Heart left ventricle (tissue), 16 donors: ENCODE measurements at regions of chr1 and their contacts with region 1.

Region 1: DNA sequence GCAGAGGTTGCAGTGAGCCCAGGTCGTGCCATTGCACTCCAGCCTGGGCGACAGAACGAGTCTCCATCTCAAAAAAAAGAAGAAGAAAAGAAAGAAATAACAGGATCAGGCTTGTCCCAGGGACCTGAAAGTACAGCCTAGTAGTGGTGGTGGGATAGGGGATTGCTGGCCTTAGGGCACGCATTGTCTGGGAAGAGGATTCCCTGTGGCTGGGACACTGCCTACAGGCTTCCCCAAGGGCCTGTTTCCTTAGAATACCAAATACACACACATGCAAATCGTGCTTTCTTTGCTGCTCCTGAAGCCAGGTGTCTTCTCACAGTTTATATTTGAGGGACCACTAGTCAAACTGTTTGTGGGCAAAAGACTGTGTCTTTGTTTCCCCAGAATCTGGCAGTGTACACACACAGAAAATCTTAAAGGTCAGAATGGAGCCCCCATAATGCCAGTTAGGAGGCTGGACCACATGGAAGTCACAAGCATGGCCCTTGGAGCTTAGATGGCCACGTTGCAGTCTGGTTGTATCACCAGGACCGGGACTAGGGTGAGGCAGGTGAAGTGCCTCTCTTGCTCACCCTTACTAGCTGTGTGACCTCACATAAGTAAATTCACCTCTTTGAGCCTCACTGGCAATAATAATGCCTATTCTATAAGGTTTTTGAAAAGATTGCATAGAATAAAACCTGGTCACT is 12.7 kb upstream of the ASAP3 start:
- DNase-seq: no peak
- ATAC-seq: peak in 2 of 4 donors; percentile 16 to 34
- H3K4me3 ChIP-seq: no peak overlapping the region
- H3K27ac ChIP-seq: no peak overlapping the region
- H3K4me1 ChIP-seq: peaks cover 0 to 7% (median 0%) of the 10 kb centered on the region in 12 donors
- H3K27me3 ChIP-seq: no peaks in the 10 kb centered on the region
- CTCF ChIP-seq: no peak
- POLR2A ChIP-seq: no peak

Region 2: DNA sequence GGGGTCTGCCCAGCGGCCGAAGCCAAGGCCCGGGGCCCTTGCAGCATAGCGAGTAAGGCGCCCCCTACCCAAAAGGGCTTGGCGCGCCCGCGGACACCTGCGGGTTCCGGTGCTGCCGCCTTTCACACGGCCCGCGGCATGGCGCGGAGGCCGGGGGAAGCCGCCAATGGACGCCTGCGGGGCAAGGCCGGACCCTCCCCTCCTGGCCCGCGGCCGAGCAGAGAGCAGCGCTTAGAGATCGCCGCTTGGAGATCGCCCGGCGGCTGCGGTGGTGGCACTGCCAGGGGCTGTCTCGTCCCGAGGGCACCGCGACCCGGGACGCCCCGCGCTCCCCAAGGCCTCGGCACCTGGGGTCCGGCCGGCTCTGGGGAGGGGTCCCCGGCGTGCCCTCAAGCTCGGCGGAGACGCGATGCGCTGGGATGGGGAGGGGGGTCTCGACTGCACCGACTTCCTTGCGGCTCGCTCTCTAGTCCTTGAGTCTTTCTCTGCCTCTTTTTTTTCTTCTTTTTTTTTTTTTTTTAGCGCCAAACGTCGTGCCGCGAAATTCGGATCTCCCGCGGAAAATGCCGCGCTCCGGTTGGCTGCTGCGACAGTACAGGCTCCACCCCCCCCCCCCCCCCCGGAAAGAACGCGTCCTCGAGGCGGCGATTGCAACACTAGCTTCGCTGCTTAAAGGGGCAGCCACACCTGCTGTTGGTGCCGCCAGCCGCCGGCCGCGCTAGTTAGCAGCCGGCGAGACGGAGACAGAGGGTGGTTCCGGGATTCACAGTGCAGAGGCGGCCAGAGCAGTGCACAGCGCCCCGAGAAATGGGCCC is 34.3 kb after region 1 on chr1 and contains the start of gene E2F2:
- intact Hi-C with region 1: loop called in 2 of 10 experiments (anchors 2 to 5 kb)
- DNase-seq: peak; percentile 81 to 92 (median 89)
- ATAC-seq: peak; percentile 76 to 93 (median 82)
- H3K4me3 ChIP-seq: peak within 1 kb of the TSS; percentile 26 to 74 (median 54)
- H3K27ac ChIP-seq: peak within 1 kb of the TSS in 3 of 12 donors; percentile 10 to 45 (median 24)
- H3K4me1 ChIP-seq: peaks cover 7 to 80% (median 25%) of the 10 kb centered on the region in 12 donors
- H3K27me3 ChIP-seq: peaks cover 0 to 14% (median 0%) of the 10 kb centered on the region in 9 donors
- CTCF ChIP-seq: peak in 3 of 12 donors; percentile 14 to 30 (median 20)
- POLR2A ChIP-seq: no peak
- total RNA-seq, gene E2F2: 0.07 to 2.7 (median 0.21) TPM in 8 of 9 donors, not detected in the other

Region 3: GRCh38 chr1:23539698-23540266 is 43.1 kb after region 1 on chr1:
- intact Hi-C with region 1: loop called in 9 of 10 experiments (anchors 1 to 5 kb)
- DNase-seq: peak; percentile 79 to 89 (median 82)
- ATAC-seq: peak; percentile 45 to 92 (median 90)
- H3K4me3 ChIP-seq: peak overlapping the region in 5 of 12 donors; percentile 2 to 29 (median 15)
- H3K27ac ChIP-seq: peak overlapping the region in 2 of 12 donors; percentile 3 to 21
- H3K4me1 ChIP-seq: peaks cover 0 to 13% (median 9%) of the 10 kb centered on the region in 12 donors
- H3K27me3 ChIP-seq: no peaks in the 10 kb centered on the region
- CTCF ChIP-seq: peak; percentile 89 to 96 (median 92)
- POLR2A ChIP-seq: no peak

Region 4: DNA sequence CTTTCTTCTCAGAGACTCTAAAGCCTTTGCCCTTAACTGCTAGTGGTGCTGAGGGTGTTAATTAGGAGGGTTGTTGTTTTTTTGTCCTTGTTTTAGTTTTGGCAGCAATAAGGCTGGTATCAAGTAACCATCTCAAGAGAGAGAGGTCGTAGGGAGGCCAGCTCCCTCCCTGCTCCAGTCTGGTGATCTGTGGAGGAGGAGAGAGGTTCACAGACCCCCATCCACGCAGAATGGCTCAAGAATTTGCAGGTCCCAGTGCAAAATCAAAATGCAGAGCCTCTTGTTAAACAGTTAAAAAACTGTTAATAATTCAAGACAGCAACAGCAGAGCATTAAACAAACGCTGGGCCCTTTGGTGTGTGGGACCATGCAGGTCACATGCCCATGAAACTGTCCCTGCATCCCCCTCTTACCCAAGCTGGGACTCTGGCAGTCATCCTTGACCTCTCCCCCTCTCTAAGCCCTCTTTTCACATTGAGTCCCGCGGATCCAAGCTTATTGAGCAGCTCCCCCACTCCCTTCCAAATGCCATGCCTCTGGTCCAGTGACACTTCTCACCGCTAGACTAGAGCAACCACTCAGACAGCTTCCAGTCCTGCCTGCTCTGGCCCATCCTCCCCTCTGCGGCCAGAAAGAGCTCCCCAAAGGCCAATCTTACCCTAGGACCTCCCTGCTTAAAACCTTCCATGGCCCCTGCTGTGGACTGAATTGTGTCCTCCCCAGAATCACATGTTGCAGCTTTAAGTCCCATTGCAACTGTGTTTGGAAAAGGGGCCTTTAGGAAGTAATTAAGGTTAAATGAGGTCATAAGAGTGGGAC is 147.3 kb after region 1 on chr1:
- intact Hi-C with region 1: loop called in 5 of 10 experiments (anchors 5 kb)
- DNase-seq: no peak
- ATAC-seq: no peak
- H3K4me3 ChIP-seq: no peak overlapping the region
- H3K27ac ChIP-seq: no peak overlapping the region
- H3K4me1 ChIP-seq: peaks cover 0 to 17% (median 0%) of the 10 kb centered on the region in 12 donors
- H3K27me3 ChIP-seq: no peaks in the 10 kb centered on the region
- CTCF ChIP-seq: no peak
- POLR2A ChIP-seq: no peak

Region 5: DNA sequence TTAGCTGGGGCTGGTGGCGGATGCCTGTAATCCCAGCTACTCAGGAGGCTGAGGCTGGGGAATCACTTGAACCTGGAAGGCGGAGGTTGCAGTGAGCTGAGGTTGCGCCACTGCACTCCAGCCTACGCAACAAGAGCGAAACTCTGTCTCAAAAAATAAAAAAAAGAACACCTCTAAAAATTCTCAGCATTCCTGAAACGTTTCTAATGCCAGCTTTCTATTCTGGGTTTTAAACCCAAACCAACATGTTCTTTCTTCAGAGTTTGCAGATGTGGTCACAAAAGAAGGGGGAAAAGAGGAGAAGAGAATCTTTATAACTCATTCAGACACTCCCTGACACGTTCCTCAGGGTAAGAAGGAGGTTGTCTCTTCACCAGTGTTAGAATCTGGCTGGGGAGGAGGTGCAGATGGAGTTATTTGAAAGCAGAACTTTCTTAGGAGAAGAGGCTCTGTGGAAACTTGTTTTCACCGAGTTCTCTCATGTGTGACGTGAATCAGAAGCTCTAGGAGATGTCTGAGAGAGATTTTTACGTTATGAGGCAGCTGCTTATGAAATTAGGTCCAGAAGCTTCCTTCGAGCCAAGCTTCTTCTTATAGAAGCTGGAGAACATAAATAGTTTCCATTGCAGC is 434.3 kb after region 1 on chr1:
- intact Hi-C with region 1: no loop called
- DNase-seq: no peak
- ATAC-seq: no peak
- H3K4me3 ChIP-seq: no peak overlapping the region
- H3K27ac ChIP-seq: peak overlapping the region in 1 of 12 donors; percentile 51
- H3K4me1 ChIP-seq: no peaks in the 10 kb centered on the region
- H3K27me3 ChIP-seq: no peaks in the 10 kb centered on the region
- CTCF ChIP-seq: no peak
- POLR2A ChIP-seq: no peak